Activated T-helper 2 cell treated with anti-CD3 and anti-CD28 coated beads, Interferon-gamma antibody, Interleukin-2, Interleukin-4, amounts not matched to agents 10 μg/mL and 5 μg/mL and 100 μg/mL, durations not matched to agents 14 hours and 24 hours and 36 hours (primary cell): ENCODE measurements at regions of chr2 and their contacts with region 1.

Region 1: DNA sequence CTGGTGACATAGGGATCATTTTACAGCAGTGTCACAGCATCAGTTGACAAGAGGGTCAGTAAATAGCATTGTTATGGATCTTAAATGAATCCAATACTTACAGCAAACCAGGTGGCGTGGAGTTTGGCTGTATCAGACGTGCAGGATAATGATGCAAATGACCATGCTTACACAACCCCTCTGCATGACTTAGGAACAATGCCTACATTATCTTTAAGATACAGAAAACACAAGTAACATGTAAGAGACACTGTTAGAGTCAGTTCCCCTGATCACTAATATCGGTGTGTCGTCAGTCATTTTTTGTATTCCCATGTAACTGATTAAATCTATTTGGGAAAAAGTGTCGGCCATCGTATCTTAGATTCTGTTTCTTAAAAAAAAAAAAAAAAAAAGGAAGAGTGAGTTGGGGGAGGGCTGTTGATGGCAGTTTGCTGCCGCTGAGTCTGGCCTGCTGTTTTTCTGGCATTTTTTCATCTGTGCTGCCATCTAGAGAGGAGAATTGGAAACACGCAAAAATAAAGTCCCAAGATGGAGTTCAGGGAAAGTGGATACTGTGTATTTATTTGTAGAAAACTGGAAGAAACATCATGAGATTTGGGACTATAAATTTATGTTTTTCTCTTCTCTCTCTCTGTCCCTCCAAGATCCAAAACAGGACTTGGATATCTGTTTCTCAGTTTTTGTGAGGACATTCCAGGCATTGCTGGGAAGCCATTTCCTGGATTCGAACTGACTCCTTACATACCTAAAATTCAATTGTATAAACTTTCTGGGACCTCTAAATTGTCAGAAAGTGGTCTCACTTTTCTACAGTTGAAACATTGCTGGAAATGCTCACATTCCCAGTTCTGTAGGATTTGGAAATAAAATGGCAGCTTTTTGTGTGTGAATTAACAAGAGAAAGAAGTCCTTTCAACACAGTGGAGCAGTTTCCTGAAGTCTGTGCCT is 60.3 kb upstream of the AGPS start:
- DNase-seq: peak; percentile 36
- H3K4me3 Mint-ChIP-seq: no peak overlapping the region
- H3K27ac Mint-ChIP-seq: no peak overlapping the region
- H3K4me1 Mint-ChIP-seq: peaks cover 14% of the 10 kb centered on the region
- H3K27me3 Mint-ChIP-seq: no peaks in the 10 kb centered on the region

Region 2: DNA sequence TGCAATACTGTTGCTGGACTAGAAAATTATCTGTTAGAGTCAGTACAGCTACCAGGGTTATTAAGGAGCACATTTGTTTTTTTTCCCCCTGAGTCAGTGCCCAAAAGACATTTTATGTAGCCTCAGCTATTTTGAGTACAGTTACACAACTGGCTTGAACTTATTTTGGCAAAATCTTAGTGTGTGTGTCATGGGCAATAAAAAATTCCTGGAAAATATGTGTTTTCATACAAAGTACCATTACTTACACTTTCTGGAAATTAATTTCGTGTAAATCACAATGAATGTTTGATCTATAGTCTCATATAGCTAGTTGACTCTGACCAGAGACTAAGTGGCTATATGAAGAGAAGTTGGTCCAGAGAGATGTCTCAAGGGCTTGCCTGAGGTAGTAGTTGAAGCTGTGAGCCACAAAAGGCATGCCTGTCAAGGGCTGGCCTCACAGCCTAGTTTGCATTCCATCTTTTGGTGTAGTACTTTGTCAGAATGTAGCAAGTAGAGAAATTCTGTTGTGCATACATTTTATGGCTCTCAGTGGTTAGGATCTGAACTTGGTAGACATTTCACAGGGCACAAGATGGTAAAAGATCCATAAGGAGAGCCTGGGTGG is 779.7 kb before region 1 on chr2:
- intact Hi-C with region 1: no loop called
- DNase-seq: no peak
- H3K4me3 Mint-ChIP-seq: no peak overlapping the region
- H3K27ac Mint-ChIP-seq: no peak overlapping the region
- H3K4me1 Mint-ChIP-seq: peaks cover 11% of the 10 kb centered on the region
- H3K27me3 Mint-ChIP-seq: peaks cover 45% of the 10 kb centered on the region

Region 3: GRCh38 chr2:177229448-177230242 is 102.7 kb before region 1 on chr2:
- intact Hi-C with region 1: no loop called
- DNase-seq: no peak
- H3K4me3 Mint-ChIP-seq: no peak overlapping the region
- H3K27ac Mint-ChIP-seq: peak overlapping the region; percentile 65
- H3K4me1 Mint-ChIP-seq: peaks cover 43% of the 10 kb centered on the region
- H3K27me3 Mint-ChIP-seq: no peaks in the 10 kb centered on the region

Region 4: DNA sequence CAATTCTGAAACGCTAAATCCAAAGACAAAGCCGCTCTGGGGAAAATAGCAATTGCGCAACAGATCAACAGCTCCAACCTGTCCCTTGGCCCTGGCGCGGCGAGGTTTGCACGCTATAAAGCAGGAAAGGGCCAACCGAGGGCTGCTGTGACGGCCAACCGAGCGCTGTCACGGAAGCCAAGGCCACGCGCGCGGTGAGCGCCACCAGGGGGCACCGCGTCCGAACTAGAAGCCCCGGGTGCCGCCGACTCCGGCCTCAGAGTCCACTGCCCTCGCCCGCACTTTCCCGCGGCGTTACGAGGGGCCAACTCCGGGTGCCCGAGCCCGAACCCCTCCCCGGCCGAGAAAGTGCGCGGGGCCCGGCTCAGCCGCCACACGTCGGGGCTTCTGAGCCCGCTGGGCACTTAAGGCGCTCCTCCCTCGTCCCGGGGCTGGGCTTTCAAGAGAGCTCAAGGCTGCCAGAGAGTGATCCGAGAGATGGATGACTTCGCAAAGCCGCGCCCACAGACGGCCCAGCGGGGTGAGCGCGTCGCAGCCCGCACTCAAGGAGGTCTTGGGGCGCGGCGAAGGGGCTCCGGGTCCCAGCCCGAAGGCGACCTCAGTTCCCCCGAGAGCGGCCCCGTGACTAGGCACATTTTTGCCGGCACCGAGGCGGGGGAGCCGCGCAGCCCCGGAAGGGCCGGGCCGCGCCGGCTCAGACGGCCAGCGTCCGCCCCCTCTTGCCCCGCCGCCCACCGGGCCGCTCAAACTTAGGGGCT is 68.7 kb before region 1 on chr2:
- intact Hi-C with region 1: loop called (anchors 1 kb)
- DNase-seq: peak; percentile 94
- H3K4me3 Mint-ChIP-seq: peak overlapping the region; percentile 90
- H3K27ac Mint-ChIP-seq: peak overlapping the region; percentile 93
- H3K4me1 Mint-ChIP-seq: peaks cover 51% of the 10 kb centered on the region
- H3K27me3 Mint-ChIP-seq: no peaks in the 10 kb centered on the region

Region 5: GRCh38 chr2:177392373-177393202 is 60.3 kb after region 1 on chr2 and contains the start of gene AGPS:
- intact Hi-C with region 1: loop called (anchors 1 kb)
- DNase-seq: peak; percentile 79
- H3K4me3 Mint-ChIP-seq: peak within 1 kb of the TSS; percentile 96
- H3K27ac Mint-ChIP-seq: peak within 1 kb of the TSS; percentile 94
- H3K4me1 Mint-ChIP-seq: peaks cover 63% of the 10 kb centered on the region
- H3K27me3 Mint-ChIP-seq: no peaks in the 10 kb centered on the region
- total RNA-seq, gene AGPS: 70.4 and 74.4 TPM in 2 replicates

Region 6: GRCh38 chr2:177552422-177553175 is 220.3 kb after region 1 on chr2:
- intact Hi-C with region 1: loop called (anchors 5 kb)
- DNase-seq: peak; percentile 89
- H3K4me3 Mint-ChIP-seq: peak overlapping the region; percentile 91
- H3K27ac Mint-ChIP-seq: peak overlapping the region; percentile 97
- H3K4me1 Mint-ChIP-seq: peaks cover 12% of the 10 kb centered on the region
- H3K27me3 Mint-ChIP-seq: peaks cover 1% of the 10 kb centered on the region

Region 7: DNA sequence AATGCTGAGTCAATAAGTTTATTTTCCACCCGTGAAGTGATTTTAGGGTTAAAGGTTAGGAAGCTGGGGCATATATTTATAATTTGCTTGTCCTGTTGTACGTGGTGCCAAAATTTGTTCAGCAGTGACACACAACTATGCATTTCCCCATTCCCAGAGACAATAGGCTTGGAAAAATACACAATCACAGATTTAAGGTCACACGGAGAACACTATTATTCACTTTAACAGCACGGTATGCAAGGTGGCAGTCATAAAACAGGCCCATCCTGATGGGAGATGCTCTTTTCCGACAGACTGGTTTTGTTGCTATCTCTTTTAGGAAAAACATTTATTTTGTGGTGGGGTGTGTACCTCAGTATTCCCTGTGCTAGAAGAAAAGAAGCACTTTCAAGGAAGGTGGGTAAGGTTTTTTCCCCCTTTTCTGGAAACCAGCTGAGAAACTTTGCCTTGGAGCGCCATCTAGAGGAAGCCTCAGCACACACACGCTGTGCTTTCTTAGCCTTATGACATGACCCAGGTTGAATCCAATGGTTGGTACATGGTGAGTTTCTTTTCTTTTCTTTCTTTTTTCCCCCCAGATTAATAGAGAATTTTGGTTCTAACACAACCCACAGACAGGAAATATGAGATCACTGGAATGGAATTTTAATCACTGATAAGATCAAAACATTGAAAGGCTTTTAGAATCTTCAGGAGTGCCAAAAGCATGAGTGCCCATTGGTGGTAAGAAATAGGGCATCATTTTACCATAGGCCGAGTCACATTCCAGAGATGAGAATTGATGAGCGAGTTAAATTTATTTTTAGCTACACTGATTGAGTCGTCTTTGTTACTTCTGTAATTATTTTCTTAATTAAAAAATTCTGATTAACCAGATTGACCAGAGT is 392.3 kb after region 1 on chr2:
- intact Hi-C with region 1: loop called (anchors 1 kb)
- DNase-seq: peak; percentile 15
- H3K4me3 Mint-ChIP-seq: no peak overlapping the region
- H3K27ac Mint-ChIP-seq: no peak overlapping the region
- H3K4me1 Mint-ChIP-seq: peaks cover 2% of the 10 kb centered on the region
- H3K27me3 Mint-ChIP-seq: peaks cover 34% of the 10 kb centered on the region